B cell (primary cell): ENCODE measurements at regions of chr11 and their contacts with region 1.

Region 1: DNA sequence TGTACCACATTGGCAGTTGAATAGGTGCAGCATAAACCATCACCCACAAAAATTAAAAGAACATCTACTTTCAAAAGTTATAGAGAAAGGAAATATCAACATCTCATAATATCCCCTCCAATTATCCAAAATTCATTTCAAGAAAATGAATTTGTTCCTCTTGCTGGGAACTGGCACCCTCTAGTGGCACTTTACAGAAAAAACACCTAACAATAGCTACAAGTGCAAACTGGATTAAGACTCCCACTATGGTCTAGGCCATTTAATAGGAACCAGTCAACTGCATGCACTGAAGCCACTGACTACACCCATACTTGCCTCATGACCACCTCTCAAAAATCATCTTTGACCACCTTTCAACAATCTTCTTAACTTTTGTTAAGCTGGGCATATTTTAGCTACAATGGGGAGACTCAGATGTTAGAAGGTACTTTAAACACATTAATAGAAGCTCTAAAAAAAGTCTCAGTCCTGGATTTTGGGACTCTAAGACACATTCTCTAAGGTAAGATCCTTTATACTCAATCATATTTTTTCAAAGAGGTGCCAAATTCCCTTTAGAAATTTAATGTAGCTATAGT is 17.3 kb downstream of the TRAF6 start:
- DNase-seq: peak; percentile 74
- ATAC-seq: peak; percentile 64
- H3K4me3 ChIP-seq: no peak overlapping the region
- H3K4me3 Mint-ChIP-seq: no peak overlapping the region
- H3K27ac ChIP-seq: peak overlapping the region in 1 of 2 donors; percentile 41
- H3K27ac Mint-ChIP-seq: no peak overlapping the region
- H3K4me1 ChIP-seq: peaks cover 8% of the 10 kb centered on the region in 2 donors
- H3K4me1 Mint-ChIP-seq: peaks cover 13% of the 10 kb centered on the region
- H3K27me3 ChIP-seq: no peaks in the 10 kb centered on the region
- H3K27me3 Mint-ChIP-seq: no peaks in the 10 kb centered on the region
- CTCF ChIP-seq: peak; percentile 92

Region 2: DNA sequence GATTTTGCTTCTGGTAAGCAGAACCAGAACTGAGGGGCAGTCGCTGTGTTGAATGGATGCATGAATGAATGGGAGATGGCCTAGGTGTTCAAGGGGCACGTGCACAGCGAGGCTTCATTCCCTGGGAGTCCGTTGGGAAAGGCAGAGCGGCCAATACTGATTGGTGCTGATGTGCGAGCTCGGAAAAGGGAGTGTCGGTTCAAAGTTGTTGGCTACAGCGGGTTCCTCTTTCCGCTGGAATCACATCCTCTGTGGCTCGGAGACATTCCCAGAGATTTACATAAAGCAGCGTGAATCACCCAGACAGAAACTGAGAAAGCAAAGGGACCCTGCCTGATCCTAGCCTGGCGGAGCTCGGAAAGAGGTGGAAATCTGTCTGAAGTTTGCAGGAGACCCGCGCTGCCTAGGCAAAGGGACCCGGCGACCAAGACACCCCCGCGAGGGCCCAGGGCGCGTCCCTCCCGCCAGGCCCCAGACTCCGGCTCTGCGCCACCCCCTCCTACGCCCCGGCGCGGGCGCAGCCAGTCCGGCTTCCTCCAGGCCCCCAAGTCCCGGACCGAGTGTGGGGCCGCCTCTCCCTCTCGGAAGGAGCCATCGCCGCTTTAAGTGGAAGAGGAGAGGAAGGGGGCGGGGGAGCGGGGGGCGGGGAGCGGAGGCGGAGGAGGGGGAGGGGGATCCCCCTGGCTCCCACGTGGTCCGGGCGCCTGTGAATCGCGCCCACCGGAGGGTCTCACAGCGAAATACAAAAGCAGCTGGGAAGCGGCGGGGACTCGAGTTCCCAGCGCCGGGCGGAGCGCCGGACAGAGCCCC is 874.9 kb before region 1 on chr11 and contains the start of gene FJX1:
- CTCF ChIA-PET with region 1: interaction called, 4 read pairs
- POLR2A ChIA-PET with region 1: no interaction called
- intact Hi-C with region 1: loop called (anchors 5 kb)
- DNase-seq: peak; percentile 29
- ATAC-seq: peak; percentile 38
- H3K4me3 ChIP-seq: peak within 1 kb of the TSS; percentile 7 to 55 (median 42)
- H3K4me3 Mint-ChIP-seq: peak within 1 kb of the TSS; percentile 83
- H3K27ac ChIP-seq: no peak within 1 kb of the TSS
- H3K27ac Mint-ChIP-seq: no peak within 1 kb of the TSS
- H3K4me1 ChIP-seq: peaks cover 17 to 21% of the 10 kb centered on the region in 2 donors
- H3K4me1 Mint-ChIP-seq: peaks cover 16% of the 10 kb centered on the region
- H3K27me3 ChIP-seq: peaks cover 0 to 52% (median 32%) of the 10 kb centered on the region in 4 experiments
- H3K27me3 Mint-ChIP-seq: peaks cover 44% of the 10 kb centered on the region
- CTCF ChIP-seq: no peak
- total RNA-seq, gene FJX1: 0.36 TPM in 1 of 2 replicates, not detected in the other

Region 3: GRCh38 chr11:35887737-35888136 is 605.1 kb before region 1 on chr11:
- CTCF ChIA-PET with region 1: no interaction called
- POLR2A ChIA-PET with region 1: no interaction called
- intact Hi-C with region 1: no loop called
- DNase-seq: no peak
- ATAC-seq: no peak
- H3K4me3 ChIP-seq: no peak overlapping the region
- H3K4me3 Mint-ChIP-seq: no peak overlapping the region
- H3K27ac ChIP-seq: no peak overlapping the region
- H3K27ac Mint-ChIP-seq: no peak overlapping the region
- H3K4me1 ChIP-seq: no peaks in the 10 kb centered on the region
- H3K4me1 Mint-ChIP-seq: no peaks in the 10 kb centered on the region
- H3K27me3 ChIP-seq: peaks cover 0 to 3% (median 1%) of the 10 kb centered on the region in 4 experiments
- H3K27me3 Mint-ChIP-seq: peaks cover 8% of the 10 kb centered on the region
- CTCF ChIP-seq: no peak

Region 4: GRCh38 chr11:36265793-36266628 is 226.8 kb before region 1 on chr11:
- CTCF ChIA-PET with region 1: interaction called, 18 read pairs
- POLR2A ChIA-PET with region 1: no interaction called
- intact Hi-C with region 1: no loop called
- DNase-seq: peak; percentile 67
- ATAC-seq: peak; percentile 51
- H3K4me3 ChIP-seq: no peak overlapping the region
- H3K4me3 Mint-ChIP-seq: no peak overlapping the region
- H3K27ac ChIP-seq: no peak overlapping the region
- H3K27ac Mint-ChIP-seq: no peak overlapping the region
- H3K4me1 ChIP-seq: no peaks in the 10 kb centered on the region
- H3K4me1 Mint-ChIP-seq: no peaks in the 10 kb centered on the region
- H3K27me3 ChIP-seq: peaks cover 0 to 4% (median 0%) of the 10 kb centered on the region in 4 experiments
- H3K27me3 Mint-ChIP-seq: peaks cover 11% of the 10 kb centered on the region
- CTCF ChIP-seq: peak; percentile 80

Region 5: GRCh38 chr11:36300651-36301050 is 192.2 kb before region 1 on chr11:
- CTCF ChIA-PET with region 1: interaction called, 142 read pairs
- POLR2A ChIA-PET with region 1: no interaction called
- intact Hi-C with region 1: no loop called
- DNase-seq: no peak
- ATAC-seq: no peak
- H3K4me3 ChIP-seq: no peak overlapping the region
- H3K4me3 Mint-ChIP-seq: no peak overlapping the region
- H3K27ac ChIP-seq: no peak overlapping the region
- H3K27ac Mint-ChIP-seq: no peak overlapping the region
- H3K4me1 ChIP-seq: no peaks in the 10 kb centered on the region
- H3K4me1 Mint-ChIP-seq: no peaks in the 10 kb centered on the region
- H3K27me3 ChIP-seq: peaks cover 0 to 5% (median 0%) of the 10 kb centered on the region in 4 experiments
- H3K27me3 Mint-ChIP-seq: peaks cover 25% of the 10 kb centered on the region
- CTCF ChIP-seq: no peak

Region 6: DNA sequence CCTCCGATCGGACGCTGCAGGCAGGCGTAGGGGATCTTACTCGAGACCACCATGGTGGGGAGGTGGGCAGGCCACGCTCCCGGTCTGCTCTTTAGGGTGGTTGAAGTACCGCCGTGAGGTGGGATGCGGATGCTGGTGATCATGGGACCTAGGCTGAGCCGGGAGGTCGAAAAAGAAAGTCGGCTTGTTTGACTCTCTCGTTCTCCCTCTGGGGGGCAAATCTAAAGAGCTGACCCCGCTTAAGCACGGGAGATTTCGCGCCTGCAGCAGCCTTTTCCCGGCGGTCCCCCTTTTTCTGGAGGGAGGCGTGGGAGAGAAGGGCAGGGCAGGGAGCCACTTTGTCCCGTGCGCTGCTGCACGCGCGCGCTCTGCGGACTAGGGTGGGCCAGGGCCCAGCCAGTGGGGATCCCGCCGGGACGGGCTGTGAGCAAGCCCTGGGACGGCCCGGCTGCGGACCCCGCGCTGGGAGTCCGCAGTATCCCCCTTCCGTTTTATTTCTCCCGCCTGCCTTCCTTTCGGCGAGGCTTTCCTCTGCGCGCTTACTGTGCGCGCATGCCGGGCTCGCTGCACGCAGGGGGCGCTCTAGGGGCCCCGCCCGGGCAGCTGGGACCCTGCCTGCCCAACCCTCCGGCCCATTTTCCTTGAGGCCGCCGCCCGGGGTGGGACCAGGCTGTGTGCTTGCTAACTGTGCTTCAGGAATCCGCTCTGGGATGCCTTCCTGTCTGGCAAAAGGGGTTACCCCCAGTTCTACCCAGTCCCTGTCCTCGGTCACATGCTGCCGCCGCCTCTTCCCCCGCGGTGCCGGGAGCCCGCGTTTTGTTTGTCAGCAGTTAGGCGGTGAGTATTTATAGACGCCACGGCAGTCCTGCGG is 115.7 kb before region 1 on chr11:
- CTCF ChIA-PET with region 1: interaction called, 14 read pairs
- POLR2A ChIA-PET with region 1: no interaction called
- intact Hi-C with region 1: loop called (anchors 5 kb)
- DNase-seq: peak; percentile 63
- ATAC-seq: peak; percentile 58
- H3K4me3 ChIP-seq: peak overlapping the region; percentile 53 to 81 (median 70)
- H3K4me3 Mint-ChIP-seq: peak overlapping the region; percentile 92
- H3K27ac ChIP-seq: no peak overlapping the region
- H3K27ac Mint-ChIP-seq: no peak overlapping the region
- H3K4me1 ChIP-seq: peaks cover 26 to 35% of the 10 kb centered on the region in 2 donors
- H3K4me1 Mint-ChIP-seq: peaks cover 33% of the 10 kb centered on the region
- H3K27me3 ChIP-seq: peaks cover 0 to 34% (median 18%) of the 10 kb centered on the region in 4 experiments
- H3K27me3 Mint-ChIP-seq: peaks cover 53% of the 10 kb centered on the region
- CTCF ChIP-seq: peak; percentile 71

Region 7: GRCh38 chr11:36478700-36479329 is 14.0 kb before region 1 on chr11:
- CTCF ChIA-PET with region 1: interaction called, 52 read pairs
- POLR2A ChIA-PET with region 1: no interaction called
- intact Hi-C with region 1: loop called (anchors 1 kb)
- DNase-seq: peak; percentile 65
- ATAC-seq: no peak
- H3K4me3 ChIP-seq: no peak overlapping the region
- H3K4me3 Mint-ChIP-seq: no peak overlapping the region
- H3K27ac ChIP-seq: no peak overlapping the region
- H3K27ac Mint-ChIP-seq: no peak overlapping the region
- H3K4me1 ChIP-seq: no peaks in the 10 kb centered on the region
- H3K4me1 Mint-ChIP-seq: no peaks in the 10 kb centered on the region
- H3K27me3 ChIP-seq: no peaks in the 10 kb centered on the region
- H3K27me3 Mint-ChIP-seq: no peaks in the 10 kb centered on the region
- CTCF ChIP-seq: peak; percentile 63